PC-9 (cell line): ENCODE measurements at regions of chr7 and their contacts with region 1.

Region 1: DNA sequence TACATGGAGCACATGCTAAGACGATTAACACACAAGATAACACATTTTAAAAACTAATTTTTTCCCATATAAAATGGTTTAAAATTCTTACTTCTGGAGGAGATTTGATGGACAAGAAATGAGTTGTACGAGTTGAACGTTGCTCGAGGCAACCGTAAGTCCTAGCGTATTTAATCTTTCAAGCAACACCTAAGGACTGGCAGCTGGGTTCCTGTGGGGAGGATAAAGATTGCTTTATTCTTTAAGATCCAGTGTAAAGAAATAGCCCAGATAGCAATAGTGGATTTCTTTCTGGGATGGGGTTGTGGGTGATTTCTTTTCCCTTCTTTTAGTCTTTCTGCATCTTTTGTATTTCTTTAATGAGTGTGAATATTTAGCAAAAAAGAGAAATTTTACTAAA is 9.8 kb downstream of the TBXAS1 start:
- DNase-seq: no peak
- H3K4me3 ChIP-seq: no peak overlapping the region
- H3K27ac ChIP-seq: no peak overlapping the region
- H3K4me1 ChIP-seq: no peaks in the 10 kb centered on the region
- H3K27me3 ChIP-seq: no peaks in the 10 kb centered on the region
- CTCF ChIP-seq: no peak

Region 2: GRCh38 chr7:139441961-139442360 is 396.9 kb before region 1 on chr7:
- CTCF ChIA-PET with region 1: no interaction called
- POLR2A ChIA-PET with region 1: no interaction called
- intact Hi-C with region 1: no loop called
- DNase-seq: no peak
- H3K4me3 ChIP-seq: no peak overlapping the region
- H3K27ac ChIP-seq: no peak overlapping the region
- H3K4me1 ChIP-seq: no peaks in the 10 kb centered on the region
- H3K27me3 ChIP-seq: no peaks in the 10 kb centered on the region
- CTCF ChIP-seq: no peak

Region 3: GRCh38 chr7:139827042-139827441 is 11.8 kb before region 1 on chr7:
- CTCF ChIA-PET with region 1: no interaction called
- POLR2A ChIA-PET with region 1: interaction called, 18 read pairs
- intact Hi-C with region 1: no loop called
- DNase-seq: no peak
- H3K4me3 ChIP-seq: no peak overlapping the region
- H3K27ac ChIP-seq: no peak overlapping the region
- H3K4me1 ChIP-seq: 0 out of 2 replicates have a peak, but pooled peaks cover 6% of the 10 kb centered on the region
- H3K27me3 ChIP-seq: peaks cover 24% of the 10 kb centered on the region
- CTCF ChIP-seq: no peak

Region 4: DNA sequence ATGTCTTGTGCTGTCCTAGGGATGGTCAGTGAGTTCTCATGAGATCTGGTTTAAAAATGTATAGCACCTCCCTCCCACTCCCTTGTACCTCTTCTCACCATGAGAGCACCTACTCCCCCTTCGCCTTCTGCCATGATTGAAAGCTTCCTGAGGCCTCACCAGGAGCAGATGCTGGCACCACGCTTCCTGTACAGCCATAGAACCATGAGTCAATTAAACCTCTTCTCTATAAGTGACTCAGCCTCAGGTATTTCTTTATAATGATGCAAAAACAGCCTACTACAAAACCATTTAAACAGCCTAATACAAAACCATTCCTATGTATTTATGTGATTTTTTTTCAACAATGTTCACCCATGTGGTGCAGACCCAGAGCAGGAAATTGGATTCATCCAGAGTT is 305.9 kb after region 1 on chr7:
- CTCF ChIA-PET with region 1: no interaction called
- POLR2A ChIA-PET with region 1: no interaction called
- intact Hi-C with region 1: no loop called
- DNase-seq: no peak
- H3K4me3 ChIP-seq: no peak overlapping the region
- H3K27ac ChIP-seq: no peak overlapping the region
- H3K4me1 ChIP-seq: no peaks in the 10 kb centered on the region
- H3K27me3 ChIP-seq: no peaks in the 10 kb centered on the region
- CTCF ChIP-seq: no peak